BJ (cell line): ENCODE measurements at regions of chr4 and their contacts with region 1.

Region 1: DNA sequence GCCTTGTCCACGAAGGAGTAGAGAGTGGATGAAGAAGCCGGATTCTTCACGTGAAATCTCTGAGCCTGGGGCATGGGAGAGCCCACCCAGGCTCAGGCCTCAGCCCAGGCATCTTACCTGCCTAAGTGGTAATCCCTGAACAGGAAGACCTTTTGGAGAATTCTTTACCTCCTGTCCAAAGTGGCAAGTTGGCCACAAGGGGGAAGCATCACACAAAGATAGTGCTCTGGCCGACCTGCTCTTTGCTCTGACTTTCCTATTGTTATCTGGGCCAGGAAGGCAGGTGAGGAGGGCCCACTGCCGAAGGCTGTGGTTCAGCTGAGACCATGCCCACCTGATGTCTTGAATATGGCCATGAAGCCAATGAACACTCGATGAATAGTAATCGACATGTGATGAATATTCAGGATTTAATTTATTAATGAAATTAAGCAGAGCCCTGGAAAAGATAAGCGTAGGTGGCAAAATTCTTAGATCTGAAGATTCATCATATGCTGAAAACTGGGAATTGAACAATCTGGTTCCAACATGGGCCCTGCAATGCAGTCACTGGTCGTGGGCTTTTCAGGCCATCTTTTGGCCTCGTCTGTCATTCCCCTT is 93.8 kb downstream of the PDGFRA start:
- DNase-seq: no peak
- H3K4me3 ChIP-seq: no peak overlapping the region
- H3K27me3 ChIP-seq: no peaks in the 10 kb centered on the region; the same call in 1 of the 2 replicates
- CTCF ChIP-seq: peak; percentile 78

Region 2: DNA sequence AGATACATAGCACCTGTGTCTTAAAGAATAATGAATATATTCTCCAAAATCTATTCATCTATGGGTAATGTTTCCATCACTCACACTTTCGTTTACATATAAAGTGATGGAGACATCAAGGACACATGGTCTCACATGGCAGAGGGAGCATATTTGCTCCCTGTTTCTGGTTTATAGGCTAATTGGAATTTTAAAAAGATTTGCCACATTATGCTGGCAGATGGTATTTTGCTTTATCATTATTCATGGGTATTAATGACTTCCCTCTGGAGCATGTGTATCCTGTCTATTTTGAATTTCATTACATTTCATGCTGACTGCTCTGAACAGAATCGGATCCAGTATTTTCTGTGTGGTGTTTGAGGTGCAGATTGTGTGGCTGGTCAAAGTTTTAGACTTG is 14.8 kb before region 1 on chr4:
- CTCF ChIA-PET with region 1: interaction called, 13 read pairs
- POLR2A ChIA-PET with region 1: no interaction called
- DNase-seq: no peak
- H3K4me3 ChIP-seq: no peak overlapping the region
- H3K27me3 ChIP-seq: peaks cover 4% of the 10 kb centered on the region
- CTCF ChIP-seq: no peak

Region 3: DNA sequence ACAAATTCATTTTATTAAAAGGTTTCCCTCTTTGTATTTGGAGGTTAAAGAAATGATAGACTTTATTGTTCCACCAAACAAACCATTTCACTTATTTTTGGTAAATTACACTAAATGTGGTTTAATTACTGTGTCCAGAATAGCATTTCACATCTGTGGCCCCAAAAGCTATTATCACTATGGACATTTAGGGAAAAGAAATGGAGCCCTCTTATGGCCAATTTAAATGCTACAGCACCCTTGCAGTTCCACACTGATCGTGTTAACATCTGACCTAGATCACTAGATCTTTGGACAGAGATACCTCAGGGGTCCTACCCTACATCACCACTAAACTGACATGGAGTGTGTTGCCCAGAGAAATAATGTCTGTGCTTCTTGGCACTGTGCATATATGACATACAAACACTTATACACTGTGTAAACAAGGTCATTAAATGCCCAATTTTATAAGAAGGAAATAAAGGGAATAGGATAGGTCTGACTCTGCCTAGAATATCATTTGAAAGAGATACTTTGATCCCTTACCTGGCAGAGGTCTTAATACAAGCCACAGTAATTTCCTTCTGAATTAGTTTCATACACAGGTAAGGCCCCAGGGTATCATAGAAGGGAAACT is 638.5 kb after region 1 on chr4:
- CTCF ChIA-PET with region 1: interaction called, 24 read pairs
- POLR2A ChIA-PET with region 1: no interaction called
- DNase-seq: no peak
- H3K4me3 ChIP-seq: no peak overlapping the region
- H3K27me3 ChIP-seq: no peaks in the 10 kb centered on the region; the same call in none of the 2 replicates
- CTCF ChIP-seq: peak; percentile 68